HCT116 (cell line): ENCODE measurements at regions of chr17 and their contacts with region 1.

Region 1: GRCh38 chr17:78082988-78083387 is 45.6 kb downstream of the TMC6 start:
- DNase-seq: no peak
- ATAC-seq: no peak
- H3K4me3 ChIP-seq: no peak overlapping the region
- H3K27ac ChIP-seq: no peak overlapping the region
- H3K4me1 ChIP-seq: no peaks in the 10 kb centered on the region
- H3K27me3 ChIP-seq: no peaks in the 10 kb centered on the region
- CTCF ChIP-seq: no peak
- POLR2A ChIP-seq: no peak
- RAD21 ChIP-seq: no peak

Region 2: DNA sequence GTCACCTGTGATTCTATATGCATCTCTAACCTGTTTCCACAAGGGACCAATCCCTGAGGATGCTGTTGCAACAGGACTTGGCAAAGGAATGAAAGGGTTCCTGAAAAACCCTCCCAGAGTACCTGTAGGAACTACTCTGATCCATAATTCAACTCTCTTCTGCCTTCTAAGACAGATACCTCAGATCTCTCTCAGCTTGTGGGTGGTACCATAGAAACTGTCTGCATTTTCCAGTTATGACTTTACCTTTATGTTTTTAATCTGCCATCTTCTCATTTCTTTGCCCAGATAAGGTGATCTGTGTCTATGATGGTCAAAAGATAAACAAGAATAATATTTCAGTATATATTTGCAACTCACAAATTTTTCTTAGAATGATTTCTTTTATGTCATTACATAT is 19.5 kb before region 1 on chr17:
- CTCF ChIA-PET with region 1: interaction called, 15 read pairs
- POLR2A ChIA-PET with region 1: no interaction called
- RAD21 ChIA-PET with region 1: no interaction called
- intact Hi-C with region 1: no loop called
- DNase-seq: no peak
- ATAC-seq: no peak
- H3K4me3 ChIP-seq: no peak overlapping the region
- H3K27ac ChIP-seq: no peak overlapping the region
- H3K4me1 ChIP-seq: no peaks in the 10 kb centered on the region
- H3K27me3 ChIP-seq: no peaks in the 10 kb centered on the region
- CTCF ChIP-seq: no peak
- POLR2A ChIP-seq: no peak
- RAD21 ChIP-seq: no peak

Region 3: GRCh38 chr17:78096093-78096492 is 13.1 kb after region 1 on chr17:
- CTCF ChIA-PET with region 1: interaction called, 21 read pairs
- POLR2A ChIA-PET with region 1: no interaction called
- RAD21 ChIA-PET with region 1: no interaction called
- intact Hi-C with region 1: no loop called
- DNase-seq: no peak
- ATAC-seq: no peak
- H3K4me3 ChIP-seq: no peak overlapping the region
- H3K27ac ChIP-seq: no peak overlapping the region
- H3K4me1 ChIP-seq: no peaks in the 10 kb centered on the region
- H3K27me3 ChIP-seq: no peaks in the 10 kb centered on the region
- CTCF ChIP-seq: no peak
- POLR2A ChIP-seq: no peak
- RAD21 ChIP-seq: no peak

Region 4: GRCh38 chr17:78176548-78177025 is 93.6 kb after region 1 on chr17:
- CTCF ChIA-PET with region 1: interaction called, 15 read pairs
- POLR2A ChIA-PET with region 1: no interaction called
- RAD21 ChIA-PET with region 1: no interaction called
- intact Hi-C with region 1: no loop called
- DNase-seq: no peak
- ATAC-seq: peak; percentile 78
- H3K4me3 ChIP-seq: no peak overlapping the region
- H3K27ac ChIP-seq: peak overlapping the region; percentile 20
- H3K4me1 ChIP-seq: peaks cover 12 to 30% of the 10 kb centered on the region in 2 experiments; a peak in 3 of 4 replicates
- H3K27me3 ChIP-seq: no peaks in the 10 kb centered on the region
- CTCF ChIP-seq: peak; percentile 81 to 99 (median 99); a peak in 5 of 6 replicates
- POLR2A ChIP-seq: no peak
- RAD21 ChIP-seq: peak; percentile 87